ENCODE measurements at regions of chr1 and their contacts with region 1.

Region 1: GRCh38 chr1:16078925-16079656 is 5.6 kb upstream of the FAM131C start:
- DNase-seq: peak; percentile 49
- ATAC-seq: peak; percentile 88
- H3K4me3 ChIP-seq: peak overlapping the region; percentile 38; the same call in 1 of the 2 replicates
- H3K27ac ChIP-seq: peak overlapping the region; percentile 0; the same call in 1 of the 2 replicates
- H3K4me1 ChIP-seq: peaks cover 8% of the 10 kb centered on the region
- H3K27me3 ChIP-seq: no peaks in the 10 kb centered on the region
- CTCF ChIP-seq: peak; percentile 92 to 95 (median 93)
- EP300 ChIP-seq: no peak
- POLR2A ChIP-seq: no peak
- RAD21 ChIP-seq: peak; percentile 88

Region 2: DNA sequence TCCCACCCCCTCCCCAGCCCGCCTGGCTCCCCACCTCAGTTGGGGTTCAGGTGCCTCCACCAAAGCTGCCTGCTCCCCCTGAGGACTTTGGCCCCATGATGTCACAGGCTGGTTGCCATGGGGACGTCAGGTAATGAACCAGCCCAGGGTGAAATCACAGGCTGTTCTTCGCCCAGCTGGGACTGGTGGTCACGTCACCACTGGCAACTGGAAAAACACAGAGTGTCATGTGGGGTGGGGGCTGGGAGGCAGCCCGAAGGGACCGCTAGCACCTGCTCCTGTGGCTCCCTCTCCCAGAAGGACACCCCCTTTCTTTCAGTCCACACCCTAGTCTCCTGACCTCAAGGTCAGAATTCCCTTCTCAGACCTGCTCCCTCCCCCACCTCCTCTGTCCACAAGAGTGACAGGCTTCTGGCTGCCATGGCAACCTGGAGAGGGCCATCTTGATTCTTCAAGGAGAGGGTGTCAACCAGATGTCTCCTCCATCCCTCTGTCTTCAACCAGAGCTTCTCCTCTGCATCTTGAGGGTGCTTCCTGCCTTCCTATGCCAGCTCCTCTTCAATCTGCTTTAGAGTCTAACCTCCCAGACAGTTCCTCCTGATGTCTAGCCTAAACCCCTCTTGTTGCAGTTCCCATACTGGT is 11.8 kb before region 1 on chr1:
- CTCF ChIA-PET with region 1: interaction called, 42 read pairs
- POLR2A ChIA-PET with region 1: no interaction called
- RAD21 ChIA-PET with region 1: interaction called, 10 read pairs
- SMC1A ChIA-PET with region 1: interaction called, 9 read pairs
- in situ Hi-C with region 1: no loop called
- intact Hi-C with region 1: no loop called
- DNase-seq: no peak
- ATAC-seq: peak; percentile 60
- H3K4me3 ChIP-seq: no peak overlapping the region
- H3K27ac ChIP-seq: no peak overlapping the region
- H3K4me1 ChIP-seq: no peaks in the 10 kb centered on the region
- H3K27me3 ChIP-seq: no peaks in the 10 kb centered on the region; a peak in 2 of 4 replicates
- CTCF ChIP-seq: no peak
- EP300 ChIP-seq: no peak
- POLR2A ChIP-seq: no peak
- RAD21 ChIP-seq: no peak

Region 3: DNA sequence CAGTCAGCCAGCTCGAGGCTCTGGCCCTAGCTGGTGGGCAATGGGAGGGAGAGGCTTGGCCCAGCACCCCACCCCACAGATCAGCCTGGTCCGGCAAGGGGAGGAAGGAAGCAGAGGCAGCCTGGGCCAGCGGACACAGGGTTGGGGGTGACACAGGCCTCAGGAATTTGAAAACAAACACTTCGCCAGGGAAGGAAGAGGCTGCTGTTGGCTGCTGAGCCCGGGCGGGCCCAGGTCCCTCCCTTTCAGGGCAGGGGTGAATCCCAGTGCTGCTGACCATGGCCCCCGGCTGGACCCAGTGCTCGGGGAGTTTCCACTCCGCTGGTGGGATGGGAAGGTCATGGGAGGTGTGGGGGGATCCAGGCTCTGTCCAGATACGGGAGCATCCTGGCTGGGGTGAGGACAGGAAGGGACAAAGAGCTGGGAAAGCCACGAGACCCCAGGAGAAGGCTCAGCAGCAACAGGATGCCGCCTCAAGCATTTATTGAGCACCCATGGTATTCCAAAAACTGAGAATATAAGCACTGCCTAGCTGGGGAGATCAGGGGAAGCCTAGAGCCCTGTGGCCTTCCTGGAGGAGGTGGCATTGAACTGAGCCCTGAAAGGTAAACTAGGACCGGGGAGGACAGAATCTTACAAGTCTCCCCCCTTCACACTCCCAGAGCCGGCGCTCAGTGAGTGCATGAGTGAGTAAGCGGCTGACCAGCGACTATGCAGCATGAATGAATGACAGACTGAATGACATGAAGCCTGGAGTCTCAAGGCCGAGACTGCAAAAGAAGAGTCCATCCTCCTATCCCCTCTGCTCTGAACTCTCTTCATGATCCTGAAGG is 103.0 kb after region 1 on chr1:
- CTCF ChIA-PET with region 1: interaction called, 375 read pairs
- POLR2A ChIA-PET with region 1: interaction called, 3 read pairs
- RAD21 ChIA-PET with region 1: interaction called, 223 read pairs
- SMC1A ChIA-PET with region 1: interaction called, 49 read pairs
- in situ Hi-C with region 1: loop called (anchors 5 kb)
- intact Hi-C with region 1: loop called (anchors 1 kb)
- DNase-seq: no peak
- ATAC-seq: no peak
- H3K4me3 ChIP-seq: no peak overlapping the region
- H3K27ac ChIP-seq: no peak overlapping the region
- H3K4me1 ChIP-seq: no peaks in the 10 kb centered on the region
- H3K27me3 ChIP-seq: no peaks in the 10 kb centered on the region
- CTCF ChIP-seq: no peak
- EP300 ChIP-seq: no peak
- POLR2A ChIP-seq: no peak
- RAD21 ChIP-seq: no peak

Region 4: DNA sequence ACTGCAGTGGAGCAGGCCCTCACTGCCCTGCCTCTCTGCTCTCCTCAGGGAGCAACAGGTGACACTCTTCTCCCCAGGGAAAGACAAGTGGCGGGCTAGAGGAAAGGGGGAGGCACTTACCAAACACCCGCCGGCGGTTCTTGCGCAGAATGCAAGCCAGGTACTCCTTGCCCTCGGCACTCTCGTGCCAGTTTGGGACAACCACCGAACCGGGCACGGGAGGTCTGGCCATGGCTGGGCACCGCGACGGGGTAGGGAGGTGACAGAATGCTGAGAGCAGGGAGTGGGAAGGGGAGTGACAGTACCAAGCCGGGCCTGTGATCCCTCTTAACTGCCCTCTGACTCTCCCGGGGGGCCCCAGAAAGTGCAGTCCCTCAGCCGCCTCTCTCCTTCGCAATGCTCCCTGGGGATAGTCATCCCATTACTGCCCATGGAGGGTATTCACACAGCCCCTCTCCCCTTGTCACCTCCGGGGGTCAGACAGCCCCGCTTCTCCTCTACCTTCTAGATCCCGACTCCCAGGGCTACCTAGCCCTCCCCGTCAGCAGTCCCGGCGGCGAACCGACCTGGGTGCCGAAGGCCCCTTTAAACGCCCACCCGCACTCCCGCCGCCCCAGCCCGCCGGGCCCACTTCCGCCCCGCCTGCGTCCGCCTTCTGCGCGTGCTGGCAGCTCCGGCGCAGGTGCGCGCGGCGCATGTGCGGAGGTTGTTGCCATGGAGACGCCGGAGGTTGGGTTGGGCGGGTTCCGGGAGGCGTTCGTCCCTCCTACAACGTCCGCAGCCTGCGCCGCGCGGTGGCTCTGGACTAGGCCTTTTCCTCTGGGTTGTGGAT is 157.6 kb after region 1 on chr1 and contains the start of gene CPLANE2:
- CTCF ChIA-PET with region 1: interaction called, 5 read pairs
- POLR2A ChIA-PET with region 1: no interaction called
- RAD21 ChIA-PET with region 1: interaction called, 6 read pairs
- SMC1A ChIA-PET with region 1: interaction called, 11 read pairs
- in situ Hi-C with region 1: loop called (anchors 5 kb)
- intact Hi-C with region 1: no loop called
- DNase-seq: peak; percentile 76
- ATAC-seq: peak; percentile 93
- H3K4me3 ChIP-seq: peak within 1 kb of the TSS; percentile 68
- H3K27ac ChIP-seq: peak within 1 kb of the TSS; percentile 84
- H3K4me1 ChIP-seq: peaks cover 17% of the 10 kb centered on the region
- H3K27me3 ChIP-seq: no peaks in the 10 kb centered on the region
- CTCF ChIP-seq: peak in 1 of 3 experiments; percentile 1; a peak in 1 of 6 replicates
- EP300 ChIP-seq: no peak
- POLR2A ChIP-seq: peak; percentile 67; the same call in 1 of the 2 replicates
- RAD21 ChIP-seq: no peak
- polyA plus RNA-seq, gene CPLANE2: 0.09 TPM in 1 of 2 experiments, not detected in the other